ENCODE measurements at regions of chr5 and their contacts with region 1.

Region 1: DNA sequence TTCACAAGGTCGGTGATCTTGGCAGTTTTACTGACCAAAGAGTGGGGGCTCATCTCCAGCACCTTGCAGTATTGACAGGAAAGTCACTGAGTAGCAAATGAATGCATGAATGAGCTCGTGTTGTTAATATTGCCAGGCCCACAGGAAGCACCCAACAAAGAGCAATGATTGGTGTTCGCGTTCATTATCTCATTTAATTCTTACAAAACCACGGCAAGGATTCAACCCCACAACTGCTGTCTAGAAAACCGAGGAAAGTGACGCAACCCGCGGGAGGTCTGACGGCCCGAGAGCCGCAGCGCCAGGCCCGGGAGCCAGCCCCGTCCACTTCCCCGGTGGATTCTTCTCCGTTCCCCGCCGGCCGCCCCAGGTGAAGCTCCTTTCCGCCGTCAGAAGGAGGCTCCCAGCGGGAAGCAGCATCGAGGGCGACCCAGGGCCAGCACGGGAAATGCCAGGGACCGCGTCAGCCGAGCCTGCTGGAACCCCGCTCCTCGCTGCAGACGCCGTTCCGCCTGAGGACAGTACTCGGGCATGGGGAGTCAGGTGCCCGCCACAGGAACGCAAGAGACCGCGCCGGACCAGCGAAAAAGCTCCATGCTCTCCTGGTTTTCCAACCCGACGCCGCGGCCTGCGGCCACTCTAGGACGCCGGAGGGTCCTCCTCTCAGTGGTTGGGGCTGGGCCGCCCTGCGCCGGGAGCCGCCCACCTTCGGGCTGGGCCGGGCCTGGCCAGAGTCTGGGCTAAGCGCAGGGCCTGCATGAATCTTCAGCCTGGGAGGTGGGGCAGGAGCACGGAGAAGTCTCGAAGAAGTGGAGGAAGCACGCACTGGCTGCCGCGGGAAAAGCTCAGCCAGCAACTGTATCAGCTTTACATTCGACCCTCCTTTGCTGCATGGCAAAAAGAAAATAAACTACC is 19.8 kb upstream of the FER start:
- DNase-seq: no peak
- ATAC-seq: peak; percentile 91
- H3K4me3 ChIP-seq: peak overlapping the region; percentile 67
- H3K27ac ChIP-seq: peak overlapping the region; percentile 92
- H3K4me1 ChIP-seq: peaks cover 28% of the 10 kb centered on the region
- H3K27me3 ChIP-seq: no peaks in the 10 kb centered on the region
- CTCF ChIP-seq: no peak
- EP300 ChIP-seq: no peak
- POLR2A ChIP-seq: peak; percentile 79
- RAD21 ChIP-seq: no peak

Region 2: DNA sequence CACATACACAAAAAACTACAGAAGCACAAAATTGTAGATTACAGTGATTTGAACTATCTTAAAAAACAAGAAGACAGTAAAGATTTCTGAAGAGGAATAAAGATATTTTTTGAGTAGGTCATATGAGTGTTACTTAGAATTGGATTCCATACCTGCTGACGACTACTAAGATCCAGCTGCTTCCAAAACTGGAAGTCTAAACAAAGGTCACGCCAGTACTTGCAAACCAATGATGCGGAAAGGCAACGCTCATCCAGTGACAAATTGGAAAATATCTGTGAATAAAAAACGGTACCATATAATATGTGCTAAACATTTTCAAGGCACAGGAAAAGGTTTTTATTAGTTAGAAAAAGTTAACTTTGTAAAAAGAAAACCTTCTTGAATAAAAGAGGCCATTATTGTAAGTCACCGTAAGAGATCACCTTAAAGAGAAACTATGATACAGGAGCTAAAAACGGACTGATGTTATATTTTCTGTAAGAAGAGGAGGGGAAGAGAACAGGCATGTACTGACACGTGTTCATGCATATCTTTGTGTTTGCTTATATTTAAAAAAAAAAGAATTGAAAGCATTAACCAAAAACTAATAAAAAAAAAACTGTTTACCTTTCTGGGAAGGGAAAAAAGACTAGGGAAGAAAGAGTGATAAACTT is 360.1 kb before region 1 on chr5:
- CTCF ChIA-PET with region 1: no interaction called
- POLR2A ChIA-PET with region 1: no interaction called
- RAD21 ChIA-PET with region 1: no interaction called
- SMC1A ChIA-PET with region 1: no interaction called
- in situ Hi-C with region 1: no loop called
- intact Hi-C with region 1: no loop called
- DNase-seq: no peak
- ATAC-seq: no peak
- H3K4me3 ChIP-seq: no peak overlapping the region
- H3K27ac ChIP-seq: no peak overlapping the region
- H3K4me1 ChIP-seq: no peaks in the 10 kb centered on the region
- H3K27me3 ChIP-seq: no peaks in the 10 kb centered on the region
- CTCF ChIP-seq: no peak
- EP300 ChIP-seq: no peak
- POLR2A ChIP-seq: no peak
- RAD21 ChIP-seq: no peak

Region 3: DNA sequence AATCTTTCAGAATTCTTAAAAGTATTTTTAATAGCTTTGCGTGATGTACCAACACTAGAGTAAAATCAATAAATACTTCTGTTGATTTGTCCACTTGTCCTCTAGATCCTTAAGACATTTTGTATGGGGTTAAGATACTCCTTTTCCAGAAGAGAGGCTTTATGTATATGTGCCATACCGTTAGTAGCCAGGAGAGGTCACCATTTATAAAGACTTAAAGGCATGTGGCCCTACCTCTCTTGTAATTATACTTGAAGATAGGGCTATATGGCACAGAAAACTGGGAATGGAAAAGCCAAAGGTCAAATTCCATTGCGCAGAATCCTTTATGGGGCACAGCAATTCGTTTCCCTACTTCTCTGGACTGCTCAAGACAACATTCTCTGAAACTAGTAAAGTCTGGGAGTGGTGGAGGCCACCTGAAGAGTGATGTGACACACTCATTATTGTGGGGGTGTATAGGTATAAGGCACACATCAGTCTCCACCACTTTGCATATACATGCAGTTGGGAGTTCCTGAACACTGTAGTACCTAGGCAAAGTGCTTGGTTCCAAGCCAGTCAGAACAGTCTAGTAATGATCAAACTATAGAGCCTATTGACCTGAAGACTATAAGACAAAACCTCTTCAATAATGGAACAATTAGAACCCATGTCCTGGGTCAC is 205.9 kb before region 1 on chr5:
- CTCF ChIA-PET with region 1: no interaction called
- POLR2A ChIA-PET with region 1: no interaction called
- RAD21 ChIA-PET with region 1: no interaction called
- SMC1A ChIA-PET with region 1: no interaction called
- in situ Hi-C with region 1: no loop called
- intact Hi-C with region 1: loop called (anchors 5 kb)
- DNase-seq: peak; percentile 57
- ATAC-seq: peak; percentile 88
- H3K4me3 ChIP-seq: no peak overlapping the region
- H3K27ac ChIP-seq: peak overlapping the region; percentile 54
- H3K4me1 ChIP-seq: peaks cover 14% of the 10 kb centered on the region
- H3K27me3 ChIP-seq: no peaks in the 10 kb centered on the region
- CTCF ChIP-seq: peak; percentile 54 to 70 (median 69); a peak in 5 of 6 replicates
- EP300 ChIP-seq: no peak
- POLR2A ChIP-seq: no peak
- RAD21 ChIP-seq: peak; percentile 83

Region 4: GRCh38 chr5:108541836-108542235 is 186.1 kb before region 1 on chr5:
- CTCF ChIA-PET with region 1: no interaction called
- POLR2A ChIA-PET with region 1: no interaction called
- RAD21 ChIA-PET with region 1: no interaction called
- SMC1A ChIA-PET with region 1: no interaction called
- in situ Hi-C with region 1: no loop called
- intact Hi-C with region 1: no loop called
- DNase-seq: no peak
- ATAC-seq: no peak
- H3K4me3 ChIP-seq: no peak overlapping the region
- H3K27ac ChIP-seq: no peak overlapping the region
- H3K4me1 ChIP-seq: no peaks in the 10 kb centered on the region
- H3K27me3 ChIP-seq: no peaks in the 10 kb centered on the region
- CTCF ChIP-seq: no peak
- EP300 ChIP-seq: no peak
- POLR2A ChIP-seq: no peak
- RAD21 ChIP-seq: no peak

Region 5: DNA sequence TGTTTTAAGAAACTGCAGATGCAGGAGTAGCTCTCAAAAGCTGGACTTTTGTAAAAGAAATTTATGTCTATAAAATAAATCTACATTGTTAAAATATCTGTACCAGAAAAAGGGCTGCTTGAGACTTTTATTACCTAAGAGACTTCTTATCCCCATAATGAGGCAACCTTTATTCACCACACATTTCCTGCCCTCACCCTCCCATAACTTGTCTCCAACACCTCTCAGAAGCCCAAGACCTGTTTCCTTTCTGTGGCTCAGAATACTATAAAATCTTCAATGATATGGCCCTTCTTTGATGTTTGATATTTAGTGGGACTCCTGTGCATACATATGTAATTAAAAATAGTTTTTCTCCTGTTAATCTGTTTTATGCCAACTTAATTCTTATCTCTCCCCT is 121.7 kb before region 1 on chr5:
- CTCF ChIA-PET with region 1: no interaction called
- POLR2A ChIA-PET with region 1: no interaction called
- RAD21 ChIA-PET with region 1: no interaction called
- SMC1A ChIA-PET with region 1: no interaction called
- in situ Hi-C with region 1: no loop called
- intact Hi-C with region 1: no loop called
- DNase-seq: no peak
- ATAC-seq: no peak
- H3K4me3 ChIP-seq: no peak overlapping the region
- H3K27ac ChIP-seq: no peak overlapping the region
- H3K4me1 ChIP-seq: no peaks in the 10 kb centered on the region
- H3K27me3 ChIP-seq: no peaks in the 10 kb centered on the region
- CTCF ChIP-seq: no peak
- EP300 ChIP-seq: no peak
- POLR2A ChIP-seq: no peak
- RAD21 ChIP-seq: no peak

Region 6: GRCh38 chr5:108748401-108749127 is 20.7 kb after region 1 on chr5:
- CTCF ChIA-PET with region 1: interaction called, 12 read pairs
- POLR2A ChIA-PET with region 1: interaction called, 42 read pairs
- RAD21 ChIA-PET with region 1: interaction called, 32 read pairs
- SMC1A ChIA-PET with region 1: interaction called, 32 read pairs
- in situ Hi-C with region 1: no loop called
- intact Hi-C with region 1: loop called (anchors 1 kb)
- DNase-seq: peak; percentile 97
- ATAC-seq: peak; percentile 94
- H3K4me3 ChIP-seq: peak overlapping the region; percentile 93
- H3K27ac ChIP-seq: peak overlapping the region; percentile 90
- H3K4me1 ChIP-seq: no peaks in the 10 kb centered on the region
- H3K27me3 ChIP-seq: no peaks in the 10 kb centered on the region
- CTCF ChIP-seq: peak in 1 of 3 experiments; percentile 14; a peak in 1 of 6 replicates
- EP300 ChIP-seq: no peak
- POLR2A ChIP-seq: peak; percentile 99
- RAD21 ChIP-seq: peak; percentile 31; the same call in 1 of the 2 replicates

Region 7: GRCh38 chr5:108818613-108819272 is 90.8 kb after region 1 on chr5:
- CTCF ChIA-PET with region 1: interaction called, 4 read pairs
- POLR2A ChIA-PET with region 1: interaction called, 5 read pairs
- RAD21 ChIA-PET with region 1: no interaction called
- SMC1A ChIA-PET with region 1: interaction called, 15 read pairs
- in situ Hi-C with region 1: no loop called
- intact Hi-C with region 1: no loop called
- DNase-seq: peak; percentile 31
- ATAC-seq: peak; percentile 99
- H3K4me3 ChIP-seq: no peak overlapping the region
- H3K27ac ChIP-seq: peak overlapping the region; percentile 39; the same call in 1 of the 2 replicates
- H3K4me1 ChIP-seq: no peaks in the 10 kb centered on the region
- H3K27me3 ChIP-seq: no peaks in the 10 kb centered on the region
- CTCF ChIP-seq: no peak
- EP300 ChIP-seq: no peak
- POLR2A ChIP-seq: no peak
- RAD21 ChIP-seq: no peak

Region 8: DNA sequence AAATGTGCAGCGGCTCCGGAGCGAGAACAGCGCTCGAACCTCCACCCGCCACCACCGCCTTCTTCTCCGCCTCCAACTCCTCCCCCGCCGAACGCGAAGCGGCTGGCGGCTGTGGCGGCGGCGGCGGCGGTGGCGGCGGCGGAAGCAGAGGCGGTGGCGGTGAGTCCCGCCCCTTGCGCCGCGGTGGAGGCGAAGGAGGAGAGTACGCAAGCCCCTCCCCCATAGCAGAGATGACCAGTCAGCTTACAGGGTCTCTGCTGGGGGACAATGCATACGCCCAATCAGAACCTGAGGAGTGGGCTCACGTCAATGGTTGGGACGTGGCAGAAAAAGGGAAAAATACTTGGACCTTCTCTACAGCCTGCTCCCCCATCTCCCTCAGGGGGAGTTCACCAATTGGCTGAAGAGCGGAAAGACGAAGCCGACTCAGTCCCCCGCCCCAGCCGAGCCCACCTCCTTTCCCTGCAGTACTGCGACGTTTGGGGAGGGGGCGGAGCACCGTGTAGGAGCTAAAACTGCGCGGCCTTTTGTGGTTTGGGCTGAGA is 682.0 kb after region 1 on chr5 and contains the start of gene PJA2:
- CTCF ChIA-PET with region 1: interaction called, 4 read pairs
- POLR2A ChIA-PET with region 1: interaction called, 3 read pairs
- RAD21 ChIA-PET with region 1: no interaction called
- SMC1A ChIA-PET with region 1: interaction called, 3 read pairs
- in situ Hi-C with region 1: no loop called
- intact Hi-C with region 1: loop called (anchors 10 kb)
- DNase-seq: peak; percentile 99
- ATAC-seq: peak; percentile 84
- H3K4me3 ChIP-seq: peak within 1 kb of the TSS; percentile 92
- H3K27ac ChIP-seq: peak within 1 kb of the TSS; percentile 98
- H3K4me1 ChIP-seq: peaks cover 10% of the 10 kb centered on the region; the same call in 1 of the 2 replicates
- H3K27me3 ChIP-seq: no peaks in the 10 kb centered on the region
- CTCF ChIP-seq: no peak
- EP300 ChIP-seq: peak in 1 of 2 experiments; percentile 60; a peak in 2 of 4 replicates
- POLR2A ChIP-seq: no peak
- RAD21 ChIP-seq: no peak
- polyA plus RNA-seq, gene PJA2: 27.8 to 28.2 TPM

Measured in GM12878 (cell line).